ENCODE measurements at regions of chr5 and their contacts with region 1.

Region 1: DNA sequence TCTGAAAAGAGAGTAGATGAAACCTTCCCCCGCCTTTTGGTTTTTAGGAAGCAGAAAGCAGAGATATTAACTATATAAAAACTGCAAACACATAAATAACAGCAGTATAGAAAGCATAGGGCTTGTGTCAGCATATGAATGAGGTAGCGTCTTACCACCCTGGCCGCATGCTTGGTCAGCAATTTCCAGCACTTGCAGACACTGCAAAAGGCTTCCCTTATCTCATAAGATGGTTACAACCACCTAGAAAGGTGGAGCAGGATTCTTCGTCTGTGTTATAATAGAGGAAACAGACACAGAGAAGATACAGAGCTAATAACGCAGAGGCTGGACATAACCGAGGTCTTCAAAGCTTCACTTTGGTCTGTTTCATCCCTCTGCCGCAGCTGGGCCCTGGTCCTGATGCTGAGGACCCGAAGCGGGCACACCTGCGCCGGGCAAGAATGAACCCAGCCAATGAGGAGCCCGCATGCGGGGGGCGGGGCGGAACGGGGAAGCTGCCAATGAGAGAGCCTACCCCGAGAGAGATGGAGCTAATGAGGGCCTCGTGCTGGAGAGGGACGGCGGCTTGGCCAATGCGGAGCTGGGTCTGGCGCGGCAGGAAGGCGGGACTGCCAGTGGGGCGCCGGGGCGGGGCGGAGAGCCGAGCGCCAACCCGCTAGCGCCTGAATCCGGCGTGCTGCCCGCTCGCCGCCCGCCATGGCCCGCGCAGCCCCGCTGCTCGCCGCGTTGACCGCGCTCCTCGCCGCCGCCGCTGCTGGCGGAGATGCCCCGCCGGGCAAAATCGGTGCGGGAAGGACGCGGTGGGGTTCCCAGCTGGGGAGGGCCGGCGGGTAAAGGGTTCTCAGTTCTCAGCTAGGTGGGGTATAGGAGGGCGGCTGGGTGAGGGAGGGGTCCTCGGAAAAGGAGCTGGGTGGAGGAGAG is at the start of gene PCYOX1L:
- DNase-seq: peak; percentile 91 to 97 (median 95)
- H3K4me3 ChIP-seq: peak within 1 kb of the TSS; percentile 70 to 82
- H3K4me3 Mint-ChIP-seq: peak within 1 kb of the TSS; percentile 94 to 98 (median 95)
- H3K27ac ChIP-seq: peak within 1 kb of the TSS; percentile 75
- H3K27ac Mint-ChIP-seq: peak within 1 kb of the TSS; percentile 92 to 98 (median 96)
- H3K4me1 ChIP-seq: peaks cover 71% of the 10 kb centered on the region
- H3K4me1 Mint-ChIP-seq: peaks cover 46 to 83% (median 63%) of the 10 kb centered on the region in 4 donors
- H3K27me3 ChIP-seq: no peaks in the 10 kb centered on the region
- H3K27me3 Mint-ChIP-seq: no peaks in the 10 kb centered on the region
- total RNA-seq, gene PCYOX1L: 40.4 to 43.9 TPM

Region 2: DNA sequence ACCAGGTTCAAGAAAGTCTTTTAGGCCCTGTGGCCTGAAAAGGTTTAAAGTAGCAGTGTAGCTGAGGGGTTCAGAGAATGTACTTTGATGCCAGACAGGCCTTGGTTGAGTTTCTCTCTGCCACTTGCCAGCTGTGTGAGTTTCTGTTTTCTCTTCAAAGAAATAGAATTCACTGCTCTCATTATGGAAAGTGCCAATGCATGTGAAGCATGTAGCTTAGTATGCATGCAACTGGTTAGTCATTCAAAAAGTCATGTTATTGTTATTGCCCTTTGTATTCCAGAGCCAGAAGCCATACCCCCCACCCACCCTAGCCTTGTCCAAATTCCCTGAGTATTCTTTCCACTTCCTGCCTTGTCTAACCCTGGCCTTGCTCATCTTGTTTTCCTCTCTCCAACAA is 429.5 kb before region 1 on chr5:
- CTCF ChIA-PET with region 1: no interaction called
- POLR2A ChIA-PET with region 1: no interaction called
- intact Hi-C with region 1: no loop called
- DNase-seq: no peak
- H3K4me3 ChIP-seq: no peak overlapping the region
- H3K4me3 Mint-ChIP-seq: no peak overlapping the region
- H3K27ac ChIP-seq: no peak overlapping the region
- H3K27ac Mint-ChIP-seq: no peak overlapping the region
- H3K4me1 ChIP-seq: no peaks in the 10 kb centered on the region
- H3K4me1 Mint-ChIP-seq: no peaks in the 10 kb centered on the region
- H3K27me3 ChIP-seq: no peaks in the 10 kb centered on the region
- H3K27me3 Mint-ChIP-seq: peaks cover 0 to 6% of the 10 kb centered on the region in 2 donors

Region 3: GRCh38 chr5:150000256-150000989 is 642.8 kb after region 1 on chr5 and contains the starts of genes HMGXB3 and TIGD6:
- CTCF ChIA-PET with region 1: no interaction called
- POLR2A ChIA-PET with region 1: no interaction called
- intact Hi-C with region 1: loop called (anchors 10 kb)
- DNase-seq: peak; percentile 75 to 84 (median 79)
- H3K4me3 ChIP-seq: peak within 1 kb of the TSS; percentile 85 to 86
- H3K4me3 Mint-ChIP-seq: peak within 1 kb of the TSS; percentile 94 to 99 (median 97)
- H3K27ac ChIP-seq: peak within 1 kb of the TSS; percentile 80
- H3K27ac Mint-ChIP-seq: peak within 1 kb of the TSS; percentile 81 to 99 (median 97)
- H3K4me1 ChIP-seq: peaks cover 28% of the 10 kb centered on the region
- H3K4me1 Mint-ChIP-seq: peaks cover 34 to 50% (median 44%) of the 10 kb centered on the region in 4 donors
- H3K27me3 ChIP-seq: no peaks in the 10 kb centered on the region
- H3K27me3 Mint-ChIP-seq: no peaks in the 10 kb centered on the region
- total RNA-seq, gene HMGXB3: 35.3 to 35.4 TPM
- total RNA-seq, gene TIGD6: 5.8 to 6.8 TPM

Measured in CD4-positive, alpha-beta memory T cell (primary cell).